A673 (cell line): ENCODE measurements at regions of chr17 and their contacts with region 1.

Region 1: DNA sequence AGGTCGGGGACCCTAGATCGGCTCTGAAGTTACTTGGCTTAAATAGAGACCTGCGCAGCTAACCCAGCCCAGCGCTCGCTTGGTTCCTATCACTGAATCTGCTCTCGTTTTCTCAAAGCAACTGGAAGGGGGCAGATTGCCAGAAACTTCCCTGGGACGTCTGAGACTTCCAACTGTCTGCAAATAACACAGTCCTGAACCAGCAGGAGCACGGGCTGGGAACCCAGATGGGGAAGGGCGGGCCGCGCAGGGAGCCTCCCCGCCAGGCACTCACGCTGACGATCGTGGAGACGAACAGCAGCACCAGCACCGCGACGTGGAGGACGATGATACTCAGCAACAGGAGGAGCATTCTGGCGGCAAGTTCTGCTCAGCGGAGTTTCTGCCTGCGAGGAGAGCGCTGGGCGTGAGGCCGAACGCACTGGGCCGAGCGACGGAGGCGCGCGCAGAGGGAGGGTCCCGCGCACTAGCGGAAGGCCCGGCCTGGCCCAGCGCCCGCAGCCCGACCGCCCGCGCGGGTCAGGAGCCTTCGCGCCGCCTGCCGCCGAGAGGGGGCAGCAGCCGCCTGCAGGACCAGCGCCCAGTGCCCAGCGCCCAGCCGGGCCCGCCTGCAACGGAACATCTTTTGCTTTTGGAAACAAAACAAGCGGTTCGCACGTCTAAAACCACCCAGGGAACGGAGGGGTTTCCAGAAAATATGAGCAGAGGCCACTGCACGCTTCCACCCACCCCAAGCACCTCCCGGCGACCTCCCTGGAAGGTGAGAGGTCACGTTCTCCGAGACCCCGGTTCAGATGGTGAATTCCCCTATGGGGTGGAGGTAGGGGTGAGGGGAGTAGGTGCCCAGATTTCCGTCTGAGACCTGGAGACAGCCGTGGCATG is 4.5 kb downstream of the PMP22 start:
- DNase-seq: peak; percentile 69
- H3K4me3 ChIP-seq: peak overlapping the region; percentile 46
- H3K27ac ChIP-seq: no peak overlapping the region
- H3K4me1 ChIP-seq: no peaks in the 10 kb centered on the region
- H3K27me3 ChIP-seq: peaks cover 57% of the 10 kb centered on the region
- CTCF ChIP-seq: peak; percentile 61

Region 2: GRCh38 chr17:15273141-15273793 is 12.7 kb after region 1 on chr17:
- CTCF ChIA-PET with region 1: no interaction called
- POLR2A ChIA-PET with region 1: no interaction called
- intact Hi-C with region 1: no loop called
- DNase-seq: no peak
- H3K4me3 ChIP-seq: no peak overlapping the region
- H3K27ac ChIP-seq: no peak overlapping the region
- H3K4me1 ChIP-seq: no peaks in the 10 kb centered on the region
- H3K27me3 ChIP-seq: peaks cover 9% of the 10 kb centered on the region
- CTCF ChIP-seq: no peak

Region 3: GRCh38 chr17:15404106-15405057 is 143.8 kb after region 1 on chr17:
- CTCF ChIA-PET with region 1: no interaction called
- POLR2A ChIA-PET with region 1: no interaction called
- intact Hi-C with region 1: no loop called
- DNase-seq: no peak
- H3K4me3 ChIP-seq: no peak overlapping the region
- H3K27ac ChIP-seq: no peak overlapping the region
- H3K4me1 ChIP-seq: no peaks in the 10 kb centered on the region
- H3K27me3 ChIP-seq: no peaks in the 10 kb centered on the region
- CTCF ChIP-seq: no peak

Region 4: DNA sequence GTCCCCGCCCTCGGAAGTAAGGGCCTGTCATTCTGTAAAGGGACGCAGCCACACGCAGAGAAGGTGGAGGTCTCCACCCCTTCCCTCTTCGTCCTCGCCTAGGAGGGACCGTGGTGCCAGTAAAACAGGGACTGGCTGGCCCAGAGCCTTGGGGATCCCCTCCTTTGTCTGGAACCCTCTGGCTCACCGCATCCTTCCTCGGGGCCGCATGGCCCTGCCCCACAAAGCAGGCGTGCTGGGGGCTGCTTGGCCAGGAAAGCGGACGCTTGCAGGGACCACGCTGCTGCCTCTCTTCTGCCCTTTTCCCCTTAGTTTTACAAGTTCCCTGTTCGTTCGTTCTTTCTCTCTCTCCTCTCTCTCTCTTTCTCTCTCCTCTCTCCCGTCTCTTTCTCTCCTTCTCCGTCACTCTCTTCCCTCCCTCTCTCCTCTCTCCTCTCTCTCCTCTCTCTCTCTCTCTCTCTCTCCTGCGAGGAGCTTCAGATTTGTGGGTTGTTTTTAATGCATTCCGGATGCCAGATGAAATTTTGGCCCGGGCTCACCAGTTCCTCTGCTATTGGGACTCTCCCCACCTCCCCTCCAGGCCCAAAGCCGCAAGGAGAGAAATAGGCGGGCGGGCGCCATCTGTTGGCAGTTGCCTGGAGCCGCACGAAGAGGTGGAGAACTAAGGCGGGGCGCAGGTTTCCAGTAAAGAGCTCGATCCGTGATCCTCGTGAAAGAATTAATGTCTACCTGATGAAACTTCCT is 241.9 kb after region 1 on chr17:
- CTCF ChIA-PET with region 1: interaction called, 10 read pairs
- POLR2A ChIA-PET with region 1: no interaction called
- intact Hi-C with region 1: loop called (anchors 2 kb)
- DNase-seq: peak; percentile 84
- H3K4me3 ChIP-seq: no peak overlapping the region
- H3K27ac ChIP-seq: no peak overlapping the region
- H3K4me1 ChIP-seq: no peaks in the 10 kb centered on the region
- H3K27me3 ChIP-seq: no peaks in the 10 kb centered on the region
- CTCF ChIP-seq: peak; percentile 93